Activated B cell treated with CpG ODN at 0.5 μM for 24 hours (primary cell): ENCODE measurements at regions of chr11 and their contacts with region 1.

Region 1: GRCh38 chr11:128026596-128026995 is 560.8 kb downstream of the ETS1 start:
- DNase-seq: no peak
- ATAC-seq: no peak
- H3K4me3 Mint-ChIP-seq: no peak overlapping the region
- H3K27ac Mint-ChIP-seq: no peak overlapping the region
- H3K4me1 Mint-ChIP-seq: no peaks in the 10 kb centered on the region
- H3K27me3 Mint-ChIP-seq: peaks cover 32% of the 10 kb centered on the region
- CTCF ChIP-seq: no peak

Region 2: DNA sequence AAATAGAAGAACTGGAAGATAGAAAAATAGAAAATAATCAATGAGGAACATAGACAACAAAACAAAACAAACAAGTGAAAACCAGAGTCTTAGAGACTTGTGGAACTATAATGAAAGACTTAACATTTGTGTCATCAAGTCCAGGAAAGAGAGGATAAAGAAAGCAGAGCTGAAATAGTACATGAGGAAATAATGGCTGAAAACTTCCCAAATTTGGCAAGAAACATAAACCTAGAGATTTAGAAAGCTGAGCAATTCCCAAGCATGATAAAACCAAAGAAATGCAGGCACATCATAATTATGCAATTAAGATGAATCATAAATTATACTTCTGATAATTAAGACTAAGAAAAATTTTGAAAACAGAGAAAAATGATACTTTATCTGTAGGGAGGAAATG is 53.8 kb before region 1 on chr11:
- CTCF ChIA-PET with region 1: no interaction called
- POLR2A ChIA-PET with region 1: no interaction called
- intact Hi-C with region 1: no loop called
- DNase-seq: no peak
- ATAC-seq: no peak
- H3K4me3 Mint-ChIP-seq: no peak overlapping the region
- H3K27ac Mint-ChIP-seq: no peak overlapping the region
- H3K4me1 Mint-ChIP-seq: no peaks in the 10 kb centered on the region
- H3K27me3 Mint-ChIP-seq: peaks cover 8% of the 10 kb centered on the region
- CTCF ChIP-seq: no peak

Region 3: DNA sequence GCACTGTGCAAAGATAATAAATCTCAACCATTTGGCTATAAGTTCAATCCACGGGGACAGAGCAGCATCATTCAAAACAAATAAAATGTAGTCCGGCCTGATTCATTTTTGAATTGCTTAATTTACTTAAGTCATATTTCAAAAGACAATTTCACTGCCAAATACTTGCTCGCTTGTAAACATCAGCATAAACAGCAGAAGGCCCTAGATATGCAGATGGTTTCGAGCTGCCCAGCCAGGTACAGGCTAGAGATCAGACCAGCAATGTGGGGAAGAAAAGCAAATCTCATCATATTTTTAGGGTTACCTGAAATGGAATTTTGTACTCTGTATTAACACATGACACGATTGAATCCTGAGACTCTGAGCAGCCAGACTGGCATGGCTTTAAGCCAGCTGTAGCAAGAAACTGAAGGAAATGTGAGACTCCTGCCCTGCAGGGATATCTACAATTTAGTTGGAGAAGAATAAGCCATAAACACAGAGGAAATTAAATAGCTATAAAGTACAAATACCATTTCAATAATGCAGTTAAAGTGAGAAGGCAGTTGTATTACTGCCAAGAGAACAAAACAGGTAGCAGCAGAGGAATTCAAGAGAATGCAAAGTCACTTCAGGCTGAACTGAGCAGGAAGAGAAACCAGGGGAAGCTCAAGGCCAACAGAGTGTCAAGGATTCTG is 120.5 kb after region 1 on chr11:
- CTCF ChIA-PET with region 1: no interaction called
- POLR2A ChIA-PET with region 1: no interaction called
- intact Hi-C with region 1: no loop called
- DNase-seq: no peak
- ATAC-seq: no peak
- H3K4me3 Mint-ChIP-seq: no peak overlapping the region
- H3K27ac Mint-ChIP-seq: no peak overlapping the region
- H3K4me1 Mint-ChIP-seq: no peaks in the 10 kb centered on the region
- H3K27me3 Mint-ChIP-seq: peaks cover 9% of the 10 kb centered on the region
- CTCF ChIP-seq: no peak

Region 4: DNA sequence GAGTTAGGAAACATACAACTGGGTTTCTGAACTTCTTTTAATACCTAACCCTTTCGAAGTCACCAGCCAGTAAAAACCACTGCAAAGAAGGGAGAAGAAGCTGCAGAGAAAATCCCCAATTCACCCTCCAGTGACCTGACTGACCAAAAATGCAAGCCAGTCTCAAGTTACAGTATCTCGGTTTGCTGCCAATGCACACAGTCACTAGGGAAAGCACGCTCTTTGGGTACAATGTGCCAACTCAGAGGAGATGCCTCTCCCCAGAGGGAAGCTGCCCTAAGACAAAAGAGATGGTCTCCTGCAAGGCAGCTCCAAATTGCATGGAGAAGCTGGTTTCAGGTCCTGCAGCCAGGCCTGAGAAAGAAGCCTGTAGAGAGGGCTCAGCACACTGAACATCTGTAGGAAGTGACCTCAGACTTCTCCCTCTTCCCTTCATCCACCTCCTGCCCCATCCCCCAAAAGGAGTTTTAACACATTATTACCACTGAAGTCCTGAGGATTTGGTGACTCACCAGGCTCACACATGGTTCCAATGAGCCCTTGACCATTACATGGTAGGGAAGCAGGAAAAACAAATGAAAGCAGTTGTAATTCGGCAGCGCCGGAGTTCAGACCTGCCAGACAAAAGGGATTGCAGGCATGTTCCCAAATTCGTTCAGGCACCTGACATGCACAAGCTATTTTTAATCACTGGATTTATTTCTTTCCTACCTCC is 470.6 kb after region 1 on chr11:
- CTCF ChIA-PET with region 1: no interaction called
- POLR2A ChIA-PET with region 1: no interaction called
- intact Hi-C with region 1: no loop called
- DNase-seq: peak; percentile 43
- ATAC-seq: peak; percentile 92
- H3K4me3 Mint-ChIP-seq: peak overlapping the region; percentile 78
- H3K27ac Mint-ChIP-seq: peak overlapping the region; percentile 93
- H3K4me1 Mint-ChIP-seq: peaks cover 98% of the 10 kb centered on the region
- H3K27me3 Mint-ChIP-seq: no peaks in the 10 kb centered on the region
- CTCF ChIP-seq: no peak

Region 5: GRCh38 chr11:128859563-128860441 is 833.2 kb after region 1 on chr11:
- CTCF ChIA-PET with region 1: no interaction called
- POLR2A ChIA-PET with region 1: no interaction called
- intact Hi-C with region 1: loop called (anchors 1 kb)
- DNase-seq: peak; percentile 77
- ATAC-seq: peak; percentile 98
- H3K4me3 Mint-ChIP-seq: no peak overlapping the region
- H3K27ac Mint-ChIP-seq: no peak overlapping the region
- H3K4me1 Mint-ChIP-seq: peaks cover 16% of the 10 kb centered on the region
- H3K27me3 Mint-ChIP-seq: no peaks in the 10 kb centered on the region
- CTCF ChIP-seq: peak; percentile 54

Region 6: GRCh38 chr11:128884703-128885338 is 858.2 kb after region 1 on chr11:
- CTCF ChIA-PET with region 1: no interaction called
- POLR2A ChIA-PET with region 1: no interaction called
- intact Hi-C with region 1: loop called (anchors 2 kb)
- DNase-seq: no peak
- ATAC-seq: peak; percentile 84
- H3K4me3 Mint-ChIP-seq: no peak overlapping the region
- H3K27ac Mint-ChIP-seq: no peak overlapping the region
- H3K4me1 Mint-ChIP-seq: no peaks in the 10 kb centered on the region
- H3K27me3 Mint-ChIP-seq: peaks cover 70% of the 10 kb centered on the region
- CTCF ChIP-seq: peak; percentile 74

Region 7: DNA sequence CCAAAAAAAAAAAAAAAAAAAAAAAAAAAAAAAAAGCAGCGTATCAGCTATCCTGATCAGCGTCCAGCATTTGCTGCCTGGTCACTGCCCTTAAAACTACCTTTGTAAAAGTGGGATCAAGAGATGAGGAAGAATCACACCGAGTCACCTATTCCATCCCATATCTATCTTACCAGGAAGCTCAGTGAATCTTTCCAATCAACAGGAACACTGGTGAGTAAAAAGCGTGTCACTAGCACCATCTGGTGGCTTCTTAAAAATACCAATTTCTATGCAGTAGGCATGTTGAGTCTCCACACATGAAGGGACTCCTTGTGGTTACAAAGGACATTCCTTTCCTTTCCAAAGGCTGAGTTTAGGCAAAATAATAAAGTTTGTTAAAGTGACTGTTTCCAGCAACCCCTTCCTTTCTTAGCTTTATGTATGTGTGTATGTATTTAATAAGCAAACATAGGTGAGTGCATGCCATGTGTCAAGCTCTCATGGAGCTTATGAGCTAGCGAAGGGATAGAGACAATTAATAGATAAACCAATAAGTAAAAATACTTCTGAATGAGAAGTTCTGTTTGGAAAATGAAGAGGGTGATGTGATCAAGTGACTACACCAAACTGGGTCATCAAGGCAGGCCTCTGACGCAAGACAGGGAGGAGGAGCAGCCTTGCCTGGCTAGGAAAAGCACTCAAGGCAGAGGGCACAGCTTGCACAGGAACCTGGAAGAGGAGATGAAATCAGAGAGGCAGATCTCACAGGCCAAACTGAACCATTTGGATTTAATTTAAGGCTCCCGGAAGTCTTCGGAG is 930.0 kb after region 1 on chr11:
- CTCF ChIA-PET with region 1: interaction called, 8 read pairs
- POLR2A ChIA-PET with region 1: no interaction called
- intact Hi-C with region 1: loop called (anchors 1 kb)
- DNase-seq: no peak
- ATAC-seq: peak; percentile 49
- H3K4me3 Mint-ChIP-seq: no peak overlapping the region
- H3K27ac Mint-ChIP-seq: no peak overlapping the region
- H3K4me1 Mint-ChIP-seq: peaks cover 2% of the 10 kb centered on the region
- H3K27me3 Mint-ChIP-seq: peaks cover 14% of the 10 kb centered on the region
- CTCF ChIP-seq: peak; percentile 31

Region 8: GRCh38 chr11:129117595-129118350 is 1091.2 kb after region 1 on chr11:
- CTCF ChIA-PET with region 1: interaction called, 3 read pairs
- POLR2A ChIA-PET with region 1: no interaction called
- intact Hi-C with region 1: loop called (anchors 2 kb)
- DNase-seq: no peak
- ATAC-seq: no peak
- H3K4me3 Mint-ChIP-seq: no peak overlapping the region
- H3K27ac Mint-ChIP-seq: no peak overlapping the region
- H3K4me1 Mint-ChIP-seq: no peaks in the 10 kb centered on the region
- H3K27me3 Mint-ChIP-seq: no peaks in the 10 kb centered on the region
- CTCF ChIP-seq: peak; percentile 92

Region 9: GRCh38 chr11:129331871-129332274 is 1305.3 kb after region 1 on chr11:
- CTCF ChIA-PET with region 1: no interaction called
- POLR2A ChIA-PET with region 1: no interaction called
- intact Hi-C with region 1: loop called (anchors 1 kb)
- DNase-seq: peak; percentile 38
- ATAC-seq: no peak
- H3K4me3 Mint-ChIP-seq: no peak overlapping the region
- H3K27ac Mint-ChIP-seq: no peak overlapping the region
- H3K4me1 Mint-ChIP-seq: peaks cover 2% of the 10 kb centered on the region
- H3K27me3 Mint-ChIP-seq: no peaks in the 10 kb centered on the region
- CTCF ChIP-seq: peak; percentile 72

Region 10: DNA sequence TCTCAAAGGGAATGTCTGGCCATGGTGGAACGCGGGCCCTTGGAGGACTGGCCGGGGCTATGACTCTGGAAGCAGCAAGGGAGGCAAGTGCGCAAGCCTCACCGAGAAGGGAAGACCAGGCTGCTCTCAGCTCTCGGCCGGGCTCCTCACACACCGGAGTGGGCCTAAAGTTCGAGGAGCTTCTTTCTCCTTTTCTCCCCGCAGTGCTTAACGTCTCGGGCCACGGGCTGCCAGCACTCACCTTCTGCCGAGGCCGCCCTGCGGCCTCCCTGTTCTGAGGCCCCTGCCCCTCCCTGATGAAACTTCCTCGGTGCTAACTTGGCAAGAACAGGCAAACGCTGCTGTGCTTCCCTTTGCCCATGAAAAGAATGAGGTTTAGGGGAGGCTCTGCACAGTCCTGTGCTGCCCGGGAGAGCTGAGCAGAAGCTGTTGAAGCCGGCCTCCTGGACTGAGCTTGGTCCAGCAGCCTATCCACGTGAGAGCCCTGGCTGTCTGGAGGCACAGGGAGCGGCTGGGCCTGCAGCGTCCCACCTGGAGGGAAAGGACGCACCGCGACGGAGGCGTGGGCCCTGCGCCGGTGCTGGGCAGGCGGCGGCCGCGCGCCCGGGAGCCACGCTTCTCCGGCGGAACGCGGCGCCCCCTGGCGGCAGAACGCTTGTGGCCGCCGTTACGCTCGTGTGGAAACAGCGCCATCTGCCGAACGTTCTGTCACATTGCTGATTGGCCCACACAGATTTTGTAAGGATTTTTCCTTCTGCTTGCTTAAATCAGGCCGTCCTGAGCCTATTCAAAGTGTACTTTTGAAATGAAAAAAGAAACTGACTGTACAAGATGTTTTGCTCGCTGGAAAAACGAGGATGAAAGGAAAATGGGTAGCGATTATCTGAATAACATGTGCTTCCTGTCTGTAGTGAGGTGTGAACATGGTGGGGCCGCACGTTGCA is 1724.0 kb after region 1 on chr11:
- CTCF ChIA-PET with region 1: no interaction called
- POLR2A ChIA-PET with region 1: no interaction called
- intact Hi-C with region 1: loop called (anchors 1 kb)
- DNase-seq: peak; percentile 69
- ATAC-seq: peak; percentile 81
- H3K4me3 Mint-ChIP-seq: no peak overlapping the region
- H3K27ac Mint-ChIP-seq: no peak overlapping the region
- H3K4me1 Mint-ChIP-seq: peaks cover 4% of the 10 kb centered on the region
- H3K27me3 Mint-ChIP-seq: peaks cover 27% of the 10 kb centered on the region
- CTCF ChIP-seq: peak; percentile 99